HepG2 (cell line): ENCODE measurements at regions of chr16 and their contacts with region 1.

Region 1: GRCh38 chr16:11396241-11397048 is 51.2 kb downstream of the RMI2 start:
- DNase-seq: peak; percentile 76
- ATAC-seq: peak; percentile 85
- H3K4me3 ChIP-seq: peak overlapping the region; percentile 53 to 79 (median 57)
- H3K27ac ChIP-seq: no peak overlapping the region
- H3K4me1 ChIP-seq: peaks cover 44% of the 10 kb centered on the region
- H3K27me3 ChIP-seq: peaks cover 48 to 74% of the 10 kb centered on the region in 2 experiments
- CTCF ChIP-seq: peak; percentile 100
- EP300 ChIP-seq: peak; percentile 23 to 34; a peak in 2 of 4 replicates
- POLR2A ChIP-seq: no peak
- RAD21 ChIP-seq: peak; percentile 99

Region 2: GRCh38 chr16:10964039-10964890 is 432.2 kb before region 1 on chr16:
- CTCF ChIA-PET with region 1: no interaction called
- POLR2A ChIA-PET with region 1: no interaction called
- in situ Hi-C with region 1: no loop called
- intact Hi-C with region 1: loop called (anchors 2 kb)
- DNase-seq: peak; percentile 74
- ATAC-seq: peak; percentile 96
- H3K4me3 ChIP-seq: no peak overlapping the region
- H3K27ac ChIP-seq: no peak overlapping the region
- H3K4me1 ChIP-seq: peaks cover 14% of the 10 kb centered on the region
- H3K27me3 ChIP-seq: no peaks in the 10 kb centered on the region
- CTCF ChIP-seq: peak; percentile 99
- EP300 ChIP-seq: peak in 1 of 2 experiments; percentile 52; a peak in 1 of 4 replicates
- POLR2A ChIP-seq: no peak
- RAD21 ChIP-seq: peak; percentile 97

Region 3: DNA sequence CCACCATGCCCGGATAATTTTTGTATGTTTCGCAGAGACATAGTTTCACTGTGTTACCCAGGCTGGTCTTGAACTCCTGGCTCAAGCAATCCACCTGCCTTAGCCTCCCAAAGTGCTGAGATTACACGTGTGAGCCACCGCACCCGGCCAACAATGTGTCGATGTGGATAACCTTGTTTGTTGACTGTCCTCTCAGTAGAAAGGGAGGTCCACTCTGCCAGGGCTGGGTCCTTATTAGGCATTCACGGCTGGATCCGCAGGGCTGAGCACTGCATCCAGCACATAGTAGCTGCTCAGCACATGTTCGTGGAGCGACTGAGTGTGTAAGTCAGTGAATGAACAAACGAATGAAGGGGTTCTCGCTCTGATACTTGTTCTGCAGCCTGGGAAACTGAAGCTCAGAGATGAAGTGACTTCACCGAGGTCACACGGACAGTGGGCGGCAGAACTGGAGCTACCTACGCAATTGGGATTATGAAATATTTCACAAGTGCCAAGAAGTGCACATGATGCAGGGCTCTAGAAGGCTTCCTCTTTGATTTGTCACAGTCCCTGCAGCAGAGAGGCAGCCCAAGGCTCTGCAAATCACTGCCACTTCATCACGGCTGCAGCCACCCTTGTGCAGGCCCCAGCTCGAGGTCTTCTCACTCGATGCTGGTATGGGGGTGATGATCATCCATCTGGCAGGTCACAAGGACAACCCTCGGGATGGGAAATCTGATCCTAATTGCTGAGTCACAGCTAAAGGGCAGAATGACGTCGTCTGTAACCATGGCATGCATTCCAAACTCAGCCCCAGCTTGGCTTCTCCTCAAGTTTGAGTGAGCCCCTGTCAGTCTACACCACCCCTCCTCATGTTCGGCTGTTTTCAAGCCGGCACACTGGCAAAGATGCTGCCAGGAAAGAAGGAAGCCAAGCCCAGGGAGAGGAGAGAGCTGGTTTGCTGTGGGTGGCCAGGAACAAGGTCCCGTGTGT is 243.8 kb after region 1 on chr16:
- CTCF ChIA-PET with region 1: interaction called, 4 read pairs
- POLR2A ChIA-PET with region 1: interaction called, 3 read pairs
- in situ Hi-C with region 1: no loop called
- intact Hi-C with region 1: loop called (anchors 2 kb)
- DNase-seq: peak; percentile 90
- ATAC-seq: peak; percentile 75
- H3K4me3 ChIP-seq: peak overlapping the region in 1 of 3 experiments; percentile 63; a peak in 2 of 6 replicates
- H3K27ac ChIP-seq: peak overlapping the region; percentile 0
- H3K4me1 ChIP-seq: peaks cover 34% of the 10 kb centered on the region
- H3K27me3 ChIP-seq: peaks cover 0 to 11% of the 10 kb centered on the region in 2 experiments; a peak in 2 of 5 replicates
- CTCF ChIP-seq: no peak; the same call in none of the 2 replicates
- EP300 ChIP-seq: peak in 1 of 2 experiments; percentile 90; a peak in 2 of 4 replicates
- POLR2A ChIP-seq: peak in 1 of 2 experiments; percentile 63; a peak in 1 of 4 replicates
- RAD21 ChIP-seq: no peak

Region 4: DNA sequence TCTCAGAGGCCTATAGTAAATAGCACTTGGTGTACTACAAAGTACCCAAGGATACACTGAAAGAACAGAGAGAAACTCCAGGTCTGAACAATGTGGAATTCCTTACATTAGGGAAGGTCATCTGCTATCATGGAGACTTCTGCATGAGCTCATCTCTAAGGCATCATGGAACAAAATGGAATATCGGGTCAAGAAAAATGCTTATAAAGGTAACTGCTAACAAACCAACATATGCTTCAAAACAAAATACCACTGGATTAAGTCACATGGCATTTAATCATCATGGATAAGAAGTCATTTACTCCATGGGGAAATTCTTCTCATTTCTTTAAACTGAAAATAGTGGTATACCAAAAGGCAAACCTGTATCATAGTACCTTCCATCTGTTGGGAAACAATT is 312.0 kb after region 1 on chr16:
- CTCF ChIA-PET with region 1: no interaction called
- POLR2A ChIA-PET with region 1: no interaction called
- in situ Hi-C with region 1: loop called (anchors 10 kb)
- intact Hi-C with region 1: loop called (anchors 5 kb)
- DNase-seq: no peak
- ATAC-seq: peak; percentile 18; the same call in 1 of the 3 replicates
- H3K4me3 ChIP-seq: no peak overlapping the region
- H3K27ac ChIP-seq: no peak overlapping the region
- H3K4me1 ChIP-seq: peaks cover 12% of the 10 kb centered on the region
- H3K27me3 ChIP-seq: no peaks in the 10 kb centered on the region
- CTCF ChIP-seq: no peak
- EP300 ChIP-seq: no peak
- POLR2A ChIP-seq: no peak
- RAD21 ChIP-seq: no peak

Region 5: GRCh38 chr16:11715246-11715947 is 319.0 kb after region 1 on chr16:
- CTCF ChIA-PET with region 1: interaction called, 19 read pairs
- POLR2A ChIA-PET with region 1: interaction called, 3 read pairs
- in situ Hi-C with region 1: loop called (anchors 10 kb)
- intact Hi-C with region 1: loop called (anchors 5 kb)
- DNase-seq: peak; percentile 15
- ATAC-seq: peak; percentile 35
- H3K4me3 ChIP-seq: no peak overlapping the region
- H3K27ac ChIP-seq: peak overlapping the region; percentile 34
- H3K4me1 ChIP-seq: peaks cover 41% of the 10 kb centered on the region
- H3K27me3 ChIP-seq: no peaks in the 10 kb centered on the region
- CTCF ChIP-seq: peak; percentile 20; the same call in 1 of the 2 replicates
- EP300 ChIP-seq: no peak
- POLR2A ChIP-seq: no peak
- RAD21 ChIP-seq: no peak